WTC11 (cell line): ENCODE measurements at regions of chr9 and their contacts with region 1.

Region 1: DNA sequence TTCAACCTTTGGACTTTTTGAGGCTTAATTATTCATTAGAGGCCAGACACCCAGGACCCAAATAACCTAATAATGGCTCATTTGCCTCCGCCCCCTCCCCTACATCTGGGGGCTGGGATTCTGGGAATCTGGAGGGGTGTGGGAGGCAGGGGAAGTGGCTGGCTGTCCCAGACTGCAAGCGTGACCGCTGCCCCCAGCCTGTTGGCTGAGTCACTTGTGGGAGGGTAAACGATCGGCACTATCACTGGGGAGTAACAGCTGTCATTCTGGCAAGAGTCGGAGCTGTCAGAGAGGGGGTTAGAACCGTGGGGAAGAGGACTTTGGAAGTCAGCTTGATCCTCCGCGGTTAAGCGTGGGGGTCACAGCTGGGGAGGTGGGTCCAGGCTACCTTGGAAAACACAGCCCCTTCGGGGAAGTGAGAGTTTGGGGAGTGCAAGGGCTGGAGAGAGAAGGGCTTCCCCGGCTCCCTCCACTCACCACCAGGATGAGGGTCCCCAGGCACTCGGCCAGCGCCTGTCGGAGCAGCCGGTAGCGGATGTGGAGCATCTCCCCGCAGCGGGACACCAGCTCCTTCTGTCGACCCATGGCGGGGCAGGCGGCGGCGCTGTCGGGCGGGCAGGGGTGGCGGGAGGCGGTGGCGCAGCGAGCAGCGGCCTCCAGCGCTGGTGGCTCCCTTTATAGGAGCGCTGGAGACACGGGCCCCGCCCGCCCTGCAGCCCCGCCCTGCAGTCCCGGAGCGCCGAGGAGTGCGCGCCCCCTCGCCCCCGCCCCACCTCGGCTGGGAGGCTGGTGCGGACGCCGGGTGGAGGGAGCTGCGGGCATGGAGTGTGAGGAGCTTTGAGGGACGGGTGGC is at the start of gene AQP3:
- DNase-seq: peak; percentile 86
- ATAC-seq: peak; percentile 81
- H3K4me3 Mint-ChIP-seq: peak within 1 kb of the TSS; percentile 80
- H3K27ac Mint-ChIP-seq: no peak within 1 kb of the TSS
- H3K4me1 Mint-ChIP-seq: peaks cover 35% of the 10 kb centered on the region
- H3K27me3 Mint-ChIP-seq: peaks cover 28% of the 10 kb centered on the region
- CTCF ChIP-seq: no peak
- total RNA-seq, gene AQP3: 3.0 to 3.6 TPM (median 3.5 TPM) in 3 replicates

Region 2: GRCh38 chr9:33374634-33375213 is 72.4 kb before region 1 on chr9:
- CTCF ChIA-PET with region 1: interaction called, 110 read pairs
- POLR2A ChIA-PET with region 1: interaction called, 5 read pairs
- DNase-seq: peak; percentile 81
- ATAC-seq: peak; percentile 87
- H3K4me3 Mint-ChIP-seq: peak overlapping the region; percentile 52
- H3K27ac Mint-ChIP-seq: peak overlapping the region; percentile 65
- H3K4me1 Mint-ChIP-seq: peaks cover 31% of the 10 kb centered on the region
- H3K27me3 Mint-ChIP-seq: no peaks in the 10 kb centered on the region
- CTCF ChIP-seq: peak; percentile 71

Region 3: DNA sequence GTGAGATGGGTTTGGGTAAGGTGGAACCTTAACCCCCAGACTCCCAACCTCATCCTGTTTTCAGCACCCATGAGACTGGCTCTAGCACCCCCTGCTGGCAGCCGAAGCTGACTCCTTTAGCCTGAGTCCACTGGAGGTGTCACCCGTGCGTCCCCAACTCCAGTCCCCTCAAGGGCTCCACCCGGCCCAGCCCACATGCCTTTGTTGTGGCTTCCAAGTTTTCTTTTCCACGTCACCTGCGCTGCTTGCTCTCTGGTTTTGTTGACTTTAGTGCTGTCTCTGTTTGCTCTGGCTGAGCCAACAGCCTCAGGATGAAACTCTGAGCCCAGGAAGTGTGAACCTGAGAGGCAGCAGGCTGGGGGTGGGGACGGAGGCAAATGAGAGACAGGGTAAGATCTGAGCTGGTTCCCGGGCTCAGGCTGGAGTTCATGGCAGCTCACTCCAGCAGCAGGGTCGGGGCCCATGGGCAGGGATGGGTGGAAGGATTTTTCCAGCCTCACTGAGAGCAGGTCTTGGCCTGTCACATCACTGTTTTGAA is 31.6 kb before region 1 on chr9:
- CTCF ChIA-PET with region 1: interaction called, 84 read pairs
- POLR2A ChIA-PET with region 1: no interaction called
- DNase-seq: peak; percentile 88
- ATAC-seq: peak; percentile 95
- H3K4me3 Mint-ChIP-seq: no peak overlapping the region
- H3K27ac Mint-ChIP-seq: no peak overlapping the region
- H3K4me1 Mint-ChIP-seq: peaks cover 7% of the 10 kb centered on the region
- H3K27me3 Mint-ChIP-seq: no peaks in the 10 kb centered on the region
- CTCF ChIP-seq: peak; percentile 51

Region 4: GRCh38 chr9:33458444-33458843 is 11.3 kb after region 1 on chr9:
- CTCF ChIA-PET with region 1: interaction called, 69 read pairs
- POLR2A ChIA-PET with region 1: interaction called, 3 read pairs
- DNase-seq: no peak
- ATAC-seq: no peak
- H3K4me3 Mint-ChIP-seq: no peak overlapping the region
- H3K27ac Mint-ChIP-seq: peak overlapping the region; percentile 28
- H3K4me1 Mint-ChIP-seq: peaks cover 1% of the 10 kb centered on the region
- H3K27me3 Mint-ChIP-seq: no peaks in the 10 kb centered on the region
- CTCF ChIP-seq: no peak

Region 5: GRCh38 chr9:33473643-33474352 is 26.6 kb after region 1 on chr9 and contains the start of gene NOL6:
- CTCF ChIA-PET with region 1: interaction called, 39 read pairs
- POLR2A ChIA-PET with region 1: interaction called, 3 read pairs
- DNase-seq: peak; percentile 98
- ATAC-seq: peak; percentile 100
- H3K4me3 Mint-ChIP-seq: peak within 1 kb of the TSS; percentile 96
- H3K27ac Mint-ChIP-seq: peak within 1 kb of the TSS; percentile 97
- H3K4me1 Mint-ChIP-seq: peaks cover 10% of the 10 kb centered on the region; the same call in 1 of the 2 replicates
- H3K27me3 Mint-ChIP-seq: no peaks in the 10 kb centered on the region
- CTCF ChIP-seq: no peak
- total RNA-seq, gene NOL6: 38.6 to 48.5 TPM (median 42.2 TPM) in 3 replicates